ENCODE measurements at regions of chr10 and their contacts with region 1.

Region 1: DNA sequence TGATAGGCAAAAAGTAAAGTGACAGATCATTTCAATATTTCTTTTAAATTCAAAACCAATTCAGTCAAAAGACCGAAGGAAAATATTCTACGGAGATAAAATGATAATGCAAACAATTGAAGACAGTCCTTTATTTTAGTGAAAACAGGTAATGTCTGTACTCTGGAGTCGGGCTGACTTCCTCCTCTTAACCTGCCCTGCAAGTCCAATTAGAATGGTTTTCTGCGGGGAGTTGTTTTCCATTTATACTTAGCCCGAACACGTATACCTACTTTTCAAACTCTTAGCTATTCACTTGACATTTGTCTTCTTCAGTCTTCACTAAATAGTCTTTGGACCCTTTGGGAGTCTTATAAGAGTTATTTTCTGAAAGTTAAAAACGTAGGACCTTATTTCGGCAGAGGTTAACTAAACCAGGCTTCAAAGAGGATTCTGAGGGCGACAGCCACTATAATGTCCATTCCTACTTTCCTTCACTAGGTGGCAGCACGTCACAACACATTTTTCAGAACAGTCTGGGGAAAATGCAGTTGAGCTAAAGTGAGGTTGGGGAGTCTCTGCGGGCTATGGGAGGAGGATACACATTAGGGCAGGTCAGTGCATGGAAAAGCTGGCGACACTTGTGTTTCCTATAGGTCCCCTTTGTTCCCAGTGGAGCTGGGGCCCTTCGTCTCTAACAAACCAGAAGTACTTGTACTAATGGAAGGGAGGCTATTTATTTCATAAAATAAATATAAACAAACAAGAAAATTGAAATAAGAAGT is 472.0 kb downstream of the KCNMA1 start:
- DNase-seq: peak; percentile 62
- H3K4me3 ChIP-seq: peak overlapping the region in 1 of 4 donors; percentile 24
- H3K27ac ChIP-seq: peak overlapping the region in 3 of 4 donors; percentile 6 to 73 (median 38)
- H3K4me1 ChIP-seq: peaks cover 12 to 67% (median 30%) of the 10 kb centered on the region in 4 donors
- H3K27me3 ChIP-seq: no peaks in the 10 kb centered on the region
- CTCF ChIP-seq: peak; percentile 69 to 88 (median 81)
- EP300 ChIP-seq: no peak
- POLR2A ChIP-seq: no peak

Region 2: GRCh38 chr10:76882245-76882644 is 283.4 kb before region 1 on chr10:
- in situ Hi-C with region 1: no loop called
- intact Hi-C with region 1: no loop called
- DNase-seq: no peak
- H3K4me3 ChIP-seq: no peak overlapping the region
- H3K27ac ChIP-seq: no peak overlapping the region
- H3K4me1 ChIP-seq: peaks cover 0 to 22% (median 10%) of the 10 kb centered on the region in 4 donors
- H3K27me3 ChIP-seq: no peaks in the 10 kb centered on the region
- CTCF ChIP-seq: no peak
- EP300 ChIP-seq: no peak
- POLR2A ChIP-seq: no peak

Region 3: GRCh38 chr10:77649333-77650331 is 484.0 kb after region 1 on chr10:
- in situ Hi-C with region 1: loop called (anchors 5 kb)
- intact Hi-C with region 1: loop called (anchors 5 kb)
- DNase-seq: no peak
- H3K4me3 ChIP-seq: no peak overlapping the region
- H3K27ac ChIP-seq: no peak overlapping the region
- H3K4me1 ChIP-seq: no peaks in the 10 kb centered on the region
- H3K27me3 ChIP-seq: peaks cover 4% of the 10 kb centered on the region
- CTCF ChIP-seq: no peak
- EP300 ChIP-seq: no peak
- POLR2A ChIP-seq: no peak

Region 4: GRCh38 chr10:77710759-77711682 is 545.4 kb after region 1 on chr10:
- in situ Hi-C with region 1: no loop called
- intact Hi-C with region 1: loop called (anchors 5 kb)
- DNase-seq: peak; percentile 77
- H3K4me3 ChIP-seq: peak overlapping the region; percentile 9 to 50 (median 22)
- H3K27ac ChIP-seq: no peak overlapping the region
- H3K4me1 ChIP-seq: peaks cover 0 to 7% (median 3%) of the 10 kb centered on the region in 4 donors
- H3K27me3 ChIP-seq: peaks cover 37% of the 10 kb centered on the region
- CTCF ChIP-seq: peak; percentile 84 to 98 (median 97)
- EP300 ChIP-seq: no peak
- POLR2A ChIP-seq: no peak